ENCODE measurements at regions of chr16 and their contacts with region 1.

Region 1: GRCh38 chr16:71883849-71884638 is at the start of gene ZNF821:
- DNase-seq: peak in 1 of 2 experiments; percentile 68
- H3K4me3 ChIP-seq: peak within 1 kb of the TSS; percentile 83
- H3K27ac ChIP-seq: peak within 1 kb of the TSS; percentile 39; the same call in 1 of the 2 replicates
- H3K4me1 ChIP-seq: peaks cover 19% of the 10 kb centered on the region
- H3K27me3 ChIP-seq: no peaks in the 10 kb centered on the region
- CTCF ChIP-seq: peak; percentile 57; the same call in 1 of the 2 replicates
- total RNA-seq, gene ZNF821: 5.9 TPM in 2 replicates

Region 2: DNA sequence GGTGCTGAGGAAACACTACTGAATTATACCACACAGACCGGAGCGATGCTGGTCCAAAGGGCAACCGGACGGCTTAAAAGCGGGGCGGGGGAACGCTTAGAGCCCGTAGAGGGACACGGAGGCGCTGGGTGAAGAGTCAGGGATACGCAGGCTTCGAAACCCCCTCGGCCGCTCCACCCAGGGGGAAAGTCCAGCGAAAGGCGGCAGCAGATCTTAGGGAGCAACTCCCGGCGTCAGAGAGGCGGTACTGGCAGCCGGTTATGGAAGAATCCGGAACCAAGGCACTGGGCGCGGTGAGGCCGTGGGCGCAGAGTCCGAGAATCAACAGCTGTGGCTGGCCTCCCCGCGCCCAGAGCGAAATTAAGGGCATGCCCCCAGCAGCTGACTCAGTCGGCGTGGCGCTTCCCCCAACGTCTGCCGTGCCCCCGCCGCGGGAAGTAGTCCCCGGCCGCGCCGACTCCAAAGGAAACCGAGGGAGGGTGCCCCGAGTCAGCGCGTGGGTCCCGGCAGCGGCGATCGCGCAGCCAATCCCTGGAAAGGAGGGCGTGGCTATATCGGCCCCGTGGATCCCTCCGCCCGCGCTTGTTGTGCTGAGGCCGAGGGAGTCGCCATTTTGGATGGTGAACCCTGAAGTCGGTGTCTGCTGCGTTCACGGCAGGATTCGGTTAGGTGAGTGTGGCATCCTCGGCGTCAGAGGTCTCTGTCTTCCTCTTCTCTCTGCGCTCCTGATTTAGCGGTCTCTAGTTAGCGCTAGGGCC is 11.1 kb after region 1 on chr16 and contains the start of gene IST1:
- CTCF ChIA-PET with region 1: no interaction called
- POLR2A ChIA-PET with region 1: no interaction called
- intact Hi-C with region 1: loop called (anchors 1 kb)
- DNase-seq: peak; percentile 89 to 96
- H3K4me3 ChIP-seq: peak within 1 kb of the TSS; percentile 100
- H3K27ac ChIP-seq: peak within 1 kb of the TSS; percentile 90
- H3K4me1 ChIP-seq: peaks cover 23% of the 10 kb centered on the region
- H3K27me3 ChIP-seq: no peaks in the 10 kb centered on the region
- CTCF ChIP-seq: no peak
- total RNA-seq, gene IST1: 177 and 204 TPM in 2 replicates

Region 3: GRCh38 chr16:71961066-71962039 is 77.3 kb after region 1 on chr16:
- CTCF ChIA-PET with region 1: interaction called, 12 read pairs
- POLR2A ChIA-PET with region 1: no interaction called
- intact Hi-C with region 1: loop called (anchors 1 kb)
- DNase-seq: peak; percentile 48 to 75
- H3K4me3 ChIP-seq: no peak overlapping the region
- H3K27ac ChIP-seq: no peak overlapping the region
- H3K4me1 ChIP-seq: no peaks in the 10 kb centered on the region
- H3K27me3 ChIP-seq: no peaks in the 10 kb centered on the region
- CTCF ChIP-seq: peak; percentile 89

Measured in PC-9 (cell line).